Posterior vena cava (tissue), 2 donors: ENCODE measurements at regions of chr9 and their contacts with region 1.

Region 1: GRCh38 chr9:96232539-96233241 is 69.3 kb downstream of the HSD17B3 start:
- DNase-seq: no peak

Region 2: DNA sequence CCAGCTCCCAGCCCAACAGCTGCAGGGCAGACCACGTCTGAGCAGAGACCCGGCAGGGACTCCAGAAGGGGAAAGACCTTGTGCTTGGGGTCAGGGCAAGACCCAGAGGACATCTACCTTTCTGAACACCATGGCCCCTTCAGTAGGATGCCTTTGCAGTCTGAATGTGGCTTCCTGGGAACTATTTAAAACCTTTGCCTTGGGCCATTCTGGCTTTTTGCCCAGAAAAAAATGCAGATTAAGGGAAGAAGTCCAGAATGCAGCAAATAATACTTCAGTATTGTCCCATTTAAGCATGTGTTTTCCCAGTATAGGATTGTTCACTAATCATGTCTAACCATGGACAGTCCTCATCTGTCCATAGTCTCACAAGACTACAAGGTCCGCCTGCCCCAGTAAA is 424.7 kb before region 1 on chr9:
- intact Hi-C with region 1: no loop called
- DNase-seq: no peak

Region 3: GRCh38 chr9:96183751-96184150 is 48.9 kb before region 1 on chr9:
- intact Hi-C with region 1: loop called in 1 of 2 experiments (anchors 2 kb)
- DNase-seq: peak; percentile 15